ENCODE measurements at regions of chr11 and their contacts with region 1.

Region 1: DNA sequence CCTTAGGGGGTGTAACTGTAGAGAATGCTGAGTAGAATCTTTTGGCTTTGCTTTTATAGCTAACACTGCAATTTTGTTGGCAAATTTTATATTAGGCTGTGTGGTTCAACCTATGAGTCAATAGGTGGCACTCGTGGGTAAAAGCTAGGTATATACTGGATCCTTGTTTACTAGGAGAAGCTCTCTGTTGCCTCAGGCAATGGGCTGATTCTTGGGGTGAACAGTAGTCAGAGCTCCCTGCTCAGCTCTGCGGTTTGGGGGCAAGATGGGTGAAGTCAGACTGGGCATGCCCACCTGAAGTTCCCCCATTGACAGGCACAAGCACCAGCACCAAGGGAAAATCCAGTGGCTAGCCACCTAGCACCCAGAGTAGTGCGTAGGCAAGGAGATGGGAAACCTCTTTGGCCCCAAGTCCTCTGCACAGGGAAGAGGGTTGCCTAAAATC is 238.7 kb downstream of the FAM181B start:
- DNase-seq: no peak
- ATAC-seq: no peak
- H3K4me3 ChIP-seq: no peak overlapping the region
- H3K27ac ChIP-seq: no peak overlapping the region
- H3K4me1 ChIP-seq: no peaks in the 10 kb centered on the region
- H3K27me3 ChIP-seq: no peaks in the 10 kb centered on the region
- CTCF ChIP-seq: no peak
- POLR2A ChIP-seq: no peak

Region 2: GRCh38 chr11:82539669-82540068 is 44.7 kb after region 1 on chr11:
- in situ Hi-C with region 1: no loop called
- intact Hi-C with region 1: no loop called
- DNase-seq: no peak
- ATAC-seq: no peak
- H3K4me3 ChIP-seq: no peak overlapping the region
- H3K27ac ChIP-seq: no peak overlapping the region
- H3K4me1 ChIP-seq: no peaks in the 10 kb centered on the region
- H3K27me3 ChIP-seq: no peaks in the 10 kb centered on the region
- CTCF ChIP-seq: no peak
- POLR2A ChIP-seq: no peak

Region 3: DNA sequence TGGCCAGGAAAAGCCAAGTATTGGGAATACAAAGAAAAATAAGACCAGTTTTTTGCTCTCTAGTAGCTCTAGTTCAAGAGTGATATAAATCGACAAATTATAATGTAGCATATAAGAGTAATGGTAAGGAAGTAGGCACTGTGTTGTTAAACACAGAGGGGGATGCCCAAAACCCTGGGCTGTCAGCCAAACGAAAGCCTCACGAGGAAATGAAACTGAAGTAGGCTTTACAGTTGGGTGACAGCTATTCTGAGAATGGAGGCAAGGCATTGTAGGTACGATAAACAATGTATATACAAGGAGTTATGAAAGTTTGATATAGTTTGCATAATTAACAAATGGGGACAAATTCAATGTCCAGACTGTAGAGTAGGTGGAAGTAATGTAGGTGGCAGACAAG is 62.3 kb after region 1 on chr11:
- in situ Hi-C with region 1: loop called in 1 of 4 experiments (anchors 10 kb)
- intact Hi-C with region 1: no loop called
- DNase-seq: peak in 1 of 2 donors; percentile 20
- ATAC-seq: no peak
- H3K4me3 ChIP-seq: no peak overlapping the region
- H3K27ac ChIP-seq: no peak overlapping the region
- H3K4me1 ChIP-seq: no peaks in the 10 kb centered on the region
- H3K27me3 ChIP-seq: no peaks in the 10 kb centered on the region
- CTCF ChIP-seq: no peak
- POLR2A ChIP-seq: no peak

Measured in gastrocnemius medialis (tissue), 4 donors.